PC-3 (cell line): ENCODE measurements at regions of chr4 and their contacts with region 1.

Region 1: DNA sequence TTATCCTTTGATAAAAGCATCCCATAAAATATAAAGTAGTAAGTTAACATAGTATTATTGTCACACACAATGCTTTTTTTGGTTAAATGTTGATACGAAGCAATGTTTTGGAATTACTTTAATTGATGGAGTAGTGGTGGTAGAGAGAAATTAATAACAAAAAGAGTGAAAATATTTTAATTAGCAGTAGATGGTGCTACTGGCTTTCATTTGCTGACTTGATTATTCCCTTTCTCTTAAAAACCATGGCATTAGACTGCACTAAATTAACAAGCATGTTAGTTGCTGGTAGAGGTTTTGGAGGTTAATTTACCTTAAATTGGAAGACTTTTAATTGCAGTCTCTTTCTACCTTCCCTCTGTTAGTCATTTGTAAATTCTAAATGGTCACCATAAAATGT is 8.9 kb upstream of the DCK start:
- DNase-seq: no peak
- ATAC-seq: no peak
- H3K4me3 ChIP-seq: no peak overlapping the region
- H3K27ac ChIP-seq: no peak overlapping the region
- H3K4me1 ChIP-seq: no peaks in the 10 kb centered on the region
- H3K27me3 ChIP-seq: no peaks in the 10 kb centered on the region
- CTCF ChIP-seq: no peak

Region 2: GRCh38 chr4:70544279-70544868 is 440.2 kb before region 1 on chr4:
- CTCF ChIA-PET with region 1: no interaction called
- POLR2A ChIA-PET with region 1: no interaction called
- intact Hi-C with region 1: no loop called
- DNase-seq: peak; percentile 55
- ATAC-seq: peak; percentile 67
- H3K4me3 ChIP-seq: no peak overlapping the region
- H3K27ac ChIP-seq: no peak overlapping the region
- H3K4me1 ChIP-seq: no peaks in the 10 kb centered on the region
- H3K27me3 ChIP-seq: peaks cover 56% of the 10 kb centered on the region
- CTCF ChIP-seq: peak; percentile 91

Region 3: GRCh38 chr4:70936200-70936787 is 48.3 kb before region 1 on chr4:
- CTCF ChIA-PET with region 1: no interaction called
- POLR2A ChIA-PET with region 1: no interaction called
- intact Hi-C with region 1: no loop called
- DNase-seq: no peak
- ATAC-seq: no peak
- H3K4me3 ChIP-seq: no peak overlapping the region
- H3K27ac ChIP-seq: no peak overlapping the region
- H3K4me1 ChIP-seq: peaks cover 4% of the 10 kb centered on the region; the same call in 1 of the 2 replicates
- H3K27me3 ChIP-seq: no peaks in the 10 kb centered on the region
- CTCF ChIP-seq: no peak

Region 4: GRCh38 chr4:70969076-70969475 is 15.5 kb before region 1 on chr4:
- CTCF ChIA-PET with region 1: no interaction called
- POLR2A ChIA-PET with region 1: no interaction called
- intact Hi-C with region 1: loop called (anchors 2 kb)
- DNase-seq: no peak
- ATAC-seq: no peak
- H3K4me3 ChIP-seq: no peak overlapping the region
- H3K27ac ChIP-seq: no peak overlapping the region
- H3K4me1 ChIP-seq: no peaks in the 10 kb centered on the region
- H3K27me3 ChIP-seq: no peaks in the 10 kb centered on the region
- CTCF ChIP-seq: no peak

Region 5: DNA sequence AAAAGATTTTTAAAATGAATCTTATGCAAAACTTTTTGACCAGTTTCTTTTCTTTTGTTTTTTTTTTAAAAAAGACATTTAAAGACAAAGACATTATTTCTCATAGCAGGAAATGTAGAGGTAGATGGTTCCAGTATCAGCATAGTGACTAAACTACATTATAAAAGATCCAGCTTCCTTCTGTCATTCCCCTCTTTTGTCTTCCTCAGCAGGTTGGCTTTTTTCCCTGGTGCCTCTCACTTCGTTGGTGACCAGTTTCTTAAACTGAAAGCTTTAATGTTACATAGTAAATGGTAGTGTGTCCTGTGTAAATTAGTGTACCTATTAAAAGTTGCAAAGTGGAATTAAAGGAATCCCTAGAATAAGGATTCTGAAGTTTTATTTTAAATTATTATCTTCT is 44.9 kb after region 1 on chr4:
- CTCF ChIA-PET with region 1: no interaction called
- POLR2A ChIA-PET with region 1: no interaction called
- intact Hi-C with region 1: no loop called
- DNase-seq: no peak
- ATAC-seq: no peak
- H3K4me3 ChIP-seq: no peak overlapping the region
- H3K27ac ChIP-seq: no peak overlapping the region
- H3K4me1 ChIP-seq: peaks cover 11% of the 10 kb centered on the region; the same call in 1 of the 2 replicates
- H3K27me3 ChIP-seq: no peaks in the 10 kb centered on the region
- CTCF ChIP-seq: no peak